ENCODE measurements at regions of chr14 and their contacts with region 1.

Region 1: DNA sequence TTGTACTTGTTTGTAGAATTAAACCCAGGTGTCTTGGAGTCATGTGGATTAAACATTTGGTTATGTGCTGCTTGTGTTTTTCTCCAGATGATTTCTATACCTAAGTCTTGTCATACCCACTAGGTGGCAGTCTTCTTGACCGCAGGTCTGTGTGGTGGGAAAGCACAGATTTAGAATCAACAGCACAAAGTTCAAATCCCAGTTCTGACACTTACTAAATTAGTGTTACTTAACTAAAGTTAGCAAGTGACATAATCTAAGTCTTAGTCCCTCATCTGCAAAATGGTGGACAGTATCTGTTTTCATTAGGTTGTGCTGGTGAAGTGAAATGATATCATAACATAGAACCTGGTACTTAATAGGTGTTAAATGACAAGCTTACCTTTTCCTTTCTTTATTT is 151.0 kb upstream of the ARHGAP5 start:
- DNase-seq: peak; percentile 49
- H3K4me3 Mint-ChIP-seq: no peak overlapping the region
- H3K27ac Mint-ChIP-seq: no peak overlapping the region
- H3K4me1 Mint-ChIP-seq: peaks cover 21% of the 10 kb centered on the region
- H3K27me3 Mint-ChIP-seq: no peaks in the 10 kb centered on the region
- CTCF ChIP-seq: peak; percentile 39

Region 2: GRCh38 chr14:31902002-31902401 is 24.1 kb before region 1 on chr14:
- CTCF ChIA-PET with region 1: interaction called, 10 read pairs
- POLR2A ChIA-PET with region 1: interaction called, 3 read pairs
- intact Hi-C with region 1: no loop called
- DNase-seq: peak; percentile 68
- H3K4me3 Mint-ChIP-seq: no peak overlapping the region
- H3K27ac Mint-ChIP-seq: no peak overlapping the region
- H3K4me1 Mint-ChIP-seq: no peaks in the 10 kb centered on the region
- H3K27me3 Mint-ChIP-seq: no peaks in the 10 kb centered on the region
- CTCF ChIP-seq: no peak

Region 3: DNA sequence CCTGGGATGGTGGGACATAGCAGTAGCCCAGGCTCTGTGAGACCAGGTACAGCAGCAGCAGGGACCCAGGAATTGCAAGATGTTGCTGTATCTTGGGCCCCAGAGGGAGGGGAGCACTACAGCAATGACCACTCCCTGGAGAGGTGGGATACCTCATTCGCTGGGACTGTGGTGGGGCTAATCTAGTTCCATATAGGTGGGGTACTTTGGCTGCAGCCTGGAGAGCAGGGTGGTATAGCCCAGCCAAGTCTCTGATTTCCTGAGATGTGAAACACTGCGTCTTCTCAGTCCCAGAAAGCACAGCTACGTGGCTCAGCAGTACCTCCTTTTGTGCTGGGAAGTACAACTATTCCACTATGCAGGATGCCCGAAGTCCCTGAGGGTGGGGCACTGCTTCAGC is 12.8 kb before region 1 on chr14:
- CTCF ChIA-PET with region 1: interaction called, 10 read pairs
- POLR2A ChIA-PET with region 1: interaction called, 3 read pairs
- intact Hi-C with region 1: no loop called
- DNase-seq: no peak
- H3K4me3 Mint-ChIP-seq: no peak overlapping the region
- H3K27ac Mint-ChIP-seq: no peak overlapping the region
- H3K4me1 Mint-ChIP-seq: no peaks in the 10 kb centered on the region
- H3K27me3 Mint-ChIP-seq: no peaks in the 10 kb centered on the region
- CTCF ChIP-seq: no peak

Measured in MCF 10A (cell line).